Pancreas (tissue), 10 donors: ENCODE measurements at regions of chr6 and their contacts with region 1.

Region 1: DNA sequence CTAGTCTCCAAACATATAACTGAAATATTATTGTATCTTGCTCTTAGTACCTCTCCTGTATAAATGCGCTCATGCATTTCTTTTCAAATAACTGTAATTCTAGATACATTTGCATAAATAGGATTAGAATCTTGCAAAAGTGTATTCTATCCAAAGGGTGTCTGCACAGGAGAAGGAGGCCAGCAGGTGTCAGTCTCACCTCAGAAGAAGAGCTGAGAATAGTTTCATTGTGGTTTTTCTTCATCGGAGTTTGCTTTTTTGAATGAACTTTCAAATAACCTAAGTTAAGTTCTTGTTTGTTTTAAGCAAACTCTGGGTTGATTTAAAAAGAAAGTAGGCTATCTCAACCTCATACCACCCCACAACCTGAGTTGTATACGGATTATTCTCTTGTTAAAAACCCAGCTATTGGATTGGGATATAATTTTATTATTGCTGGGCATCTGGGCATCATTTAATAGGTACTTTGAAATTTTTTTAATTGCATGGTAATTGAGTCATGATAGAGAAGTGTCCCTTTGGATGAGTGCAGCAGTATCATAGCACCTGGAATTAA is 125.0 kb upstream of the MLIP start:
- DNase-seq: peak in 1 of 6 donors; percentile 28
- ATAC-seq: peak in 3 of 4 donors; percentile 75 to 86 (median 79)
- H3K4me3 ChIP-seq: no peak overlapping the region
- H3K27ac ChIP-seq: no peak overlapping the region
- H3K4me1 ChIP-seq: no peaks in the 10 kb centered on the region
- H3K27me3 ChIP-seq: no peaks in the 10 kb centered on the region
- CTCF ChIP-seq: peak; percentile 20 to 52 (median 38)

Region 2: DNA sequence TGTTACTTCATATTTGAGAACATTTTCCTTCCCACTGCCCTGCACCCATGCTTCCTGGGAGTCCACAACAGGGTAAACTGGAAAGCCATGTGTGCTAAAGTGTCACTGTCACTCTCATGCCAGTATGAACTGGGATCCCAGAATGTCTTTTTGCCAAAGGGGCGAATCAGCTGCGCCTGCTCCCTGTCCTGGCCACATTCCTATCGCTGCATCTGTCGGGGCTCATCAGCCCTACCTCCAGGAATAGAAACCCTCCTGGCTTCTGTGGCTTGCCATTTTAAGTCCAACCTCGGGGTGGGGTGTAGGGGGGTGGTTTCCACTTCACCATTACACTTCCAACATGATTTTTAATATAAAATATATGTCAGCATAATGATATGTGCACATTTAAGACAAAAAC is 321.6 kb before region 1 on chr6:
- intact Hi-C with region 1: no loop called
- DNase-seq: no peak
- ATAC-seq: no peak
- H3K4me3 ChIP-seq: no peak overlapping the region
- H3K27ac ChIP-seq: no peak overlapping the region
- H3K4me1 ChIP-seq: no peaks in the 10 kb centered on the region
- H3K27me3 ChIP-seq: no peaks in the 10 kb centered on the region
- CTCF ChIP-seq: no peak

Region 3: DNA sequence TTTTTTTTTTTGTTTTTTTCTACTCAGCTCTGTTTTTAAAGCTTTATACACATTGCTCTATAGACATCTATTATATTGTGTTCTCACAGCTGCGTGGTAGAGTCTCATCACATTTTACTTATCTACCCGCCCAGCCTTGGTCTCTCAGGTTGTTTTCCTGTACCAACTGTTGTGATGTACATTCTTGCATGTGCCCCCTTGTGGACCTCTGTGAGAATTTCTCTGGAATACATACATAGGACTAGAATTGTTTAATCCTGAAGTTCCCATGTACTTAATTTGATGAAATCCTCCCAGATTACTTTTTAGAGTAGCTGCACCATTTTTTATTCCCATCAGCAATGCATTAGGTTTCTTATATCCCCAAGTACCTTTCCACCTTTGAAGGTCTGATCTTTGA is 281.6 kb after region 1 on chr6:
- intact Hi-C with region 1: loop called in 1 of 3 experiments (anchors 10 kb)
- DNase-seq: peak in 2 of 6 donors; percentile 2 to 13
- ATAC-seq: peak in 2 of 4 donors; percentile 51 to 60
- H3K4me3 ChIP-seq: no peak overlapping the region
- H3K27ac ChIP-seq: no peak overlapping the region
- H3K4me1 ChIP-seq: no peaks in the 10 kb centered on the region
- H3K27me3 ChIP-seq: no peaks in the 10 kb centered on the region
- CTCF ChIP-seq: peak in 2 of 4 donors; percentile 19 to 21